ENCODE measurements at regions of chr2 and their contacts with region 1.

Region 1: DNA sequence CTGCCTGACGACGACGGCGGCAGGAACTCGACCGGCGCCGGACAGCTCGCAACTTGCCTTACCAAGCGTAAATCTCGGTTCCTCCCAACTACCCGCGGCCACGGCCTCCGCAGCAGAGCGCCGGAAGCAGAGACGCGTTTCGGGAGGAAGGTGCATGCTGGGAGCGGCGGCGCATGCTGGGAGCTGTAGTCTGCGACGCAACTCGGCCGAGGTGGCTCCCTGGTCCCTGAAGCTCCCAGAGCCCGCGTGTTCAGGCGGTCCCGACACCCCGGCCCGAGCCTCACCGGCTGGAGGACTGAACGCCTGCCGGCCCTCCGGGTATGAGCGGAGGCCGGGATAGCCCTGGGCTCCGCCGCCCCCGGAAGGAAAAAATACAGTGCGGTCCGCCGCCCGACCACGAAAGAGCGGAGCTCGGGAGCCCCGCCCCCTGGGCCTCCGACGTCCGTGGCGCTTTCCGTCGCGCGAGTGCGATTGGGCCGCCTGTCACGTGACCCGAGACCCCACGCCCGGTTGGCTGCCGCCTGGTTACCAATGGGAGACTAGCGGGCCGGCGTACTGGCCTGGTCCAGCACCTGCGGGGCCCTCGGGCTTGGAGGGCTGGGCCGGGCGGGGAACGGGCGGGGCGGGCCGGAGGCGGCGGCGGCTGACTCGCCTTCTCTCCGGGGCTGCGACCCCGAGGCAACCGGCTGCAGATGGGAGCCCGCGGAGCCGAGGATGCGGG is at the start of gene CAPN10:
- DNase-seq: peak; percentile 97
- H3K4me3 Mint-ChIP-seq: peak within 1 kb of the TSS; percentile 92
- H3K27ac Mint-ChIP-seq: peak within 1 kb of the TSS; percentile 86
- H3K4me1 Mint-ChIP-seq: peaks cover 44% of the 10 kb centered on the region
- H3K27me3 Mint-ChIP-seq: no peaks in the 10 kb centered on the region
- total RNA-seq, gene CAPN10: 24.9 to 28.5 TPM

Region 2: GRCh38 chr2:240624950-240625621 is 38.7 kb after region 1 on chr2 and contains the start of gene GPR35:
- CTCF ChIA-PET with region 1: no interaction called
- intact Hi-C with region 1: loop called (anchors 1 kb)
- DNase-seq: peak; percentile 86
- H3K4me3 Mint-ChIP-seq: peak within 1 kb of the TSS; percentile 42
- H3K27ac Mint-ChIP-seq: peak within 1 kb of the TSS; percentile 47
- H3K4me1 Mint-ChIP-seq: peaks cover 51% of the 10 kb centered on the region
- H3K27me3 Mint-ChIP-seq: no peaks in the 10 kb centered on the region
- total RNA-seq, gene GPR35: 2.5 to 2.6 TPM

Region 3: GRCh38 chr2:240791821-240792628 is 205.7 kb after region 1 on chr2:
- CTCF ChIA-PET with region 1: no interaction called
- intact Hi-C with region 1: no loop called
- DNase-seq: no peak
- H3K4me3 Mint-ChIP-seq: no peak overlapping the region
- H3K27ac Mint-ChIP-seq: no peak overlapping the region
- H3K4me1 Mint-ChIP-seq: no peaks in the 10 kb centered on the region
- H3K27me3 Mint-ChIP-seq: peaks cover 3% of the 10 kb centered on the region

Measured in activated naive CD4-positive, alpha-beta T cell treated with anti-CD3 and anti-CD28 coated beads for 36 hours (primary cell).